ENCODE measurements at regions of chr18 and their contacts with region 1.

Region 1: GRCh38 chr18:54181856-54182602 is 42.4 kb downstream of the MBD2 start:
- DNase-seq: no peak
- H3K4me3 Mint-ChIP-seq: no peak overlapping the region
- H3K27ac Mint-ChIP-seq: no peak overlapping the region
- H3K4me1 Mint-ChIP-seq: peaks cover 3% of the 10 kb centered on the region
- H3K27me3 Mint-ChIP-seq: no peaks in the 10 kb centered on the region

Region 2: DNA sequence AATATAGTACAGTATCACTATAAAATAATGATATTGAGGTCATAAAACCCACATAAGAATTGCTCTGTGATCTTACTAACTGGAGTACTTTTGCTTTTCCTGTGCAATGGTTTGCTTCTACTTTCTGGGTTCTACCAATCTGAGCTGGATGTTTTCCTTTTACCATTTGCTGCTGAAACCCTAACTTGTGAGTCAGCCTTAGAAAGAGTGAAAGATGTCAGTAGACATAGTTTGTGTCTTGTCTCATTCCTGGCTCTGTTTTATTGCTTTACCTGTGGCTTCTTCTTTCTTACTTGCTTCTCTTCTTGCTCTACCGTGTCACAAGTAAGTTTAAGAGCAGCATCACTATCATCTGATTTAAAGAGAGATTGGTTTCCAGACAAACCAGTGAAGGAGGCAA is 18.6 kb before region 1 on chr18:
- CTCF ChIA-PET with region 1: interaction called, 3 read pairs
- POLR2A ChIA-PET with region 1: no interaction called
- intact Hi-C with region 1: loop called (anchors 1 kb)
- DNase-seq: no peak
- H3K4me3 Mint-ChIP-seq: no peak overlapping the region
- H3K27ac Mint-ChIP-seq: peak overlapping the region; percentile 85
- H3K4me1 Mint-ChIP-seq: peaks cover 22% of the 10 kb centered on the region
- H3K27me3 Mint-ChIP-seq: no peaks in the 10 kb centered on the region

Region 3: DNA sequence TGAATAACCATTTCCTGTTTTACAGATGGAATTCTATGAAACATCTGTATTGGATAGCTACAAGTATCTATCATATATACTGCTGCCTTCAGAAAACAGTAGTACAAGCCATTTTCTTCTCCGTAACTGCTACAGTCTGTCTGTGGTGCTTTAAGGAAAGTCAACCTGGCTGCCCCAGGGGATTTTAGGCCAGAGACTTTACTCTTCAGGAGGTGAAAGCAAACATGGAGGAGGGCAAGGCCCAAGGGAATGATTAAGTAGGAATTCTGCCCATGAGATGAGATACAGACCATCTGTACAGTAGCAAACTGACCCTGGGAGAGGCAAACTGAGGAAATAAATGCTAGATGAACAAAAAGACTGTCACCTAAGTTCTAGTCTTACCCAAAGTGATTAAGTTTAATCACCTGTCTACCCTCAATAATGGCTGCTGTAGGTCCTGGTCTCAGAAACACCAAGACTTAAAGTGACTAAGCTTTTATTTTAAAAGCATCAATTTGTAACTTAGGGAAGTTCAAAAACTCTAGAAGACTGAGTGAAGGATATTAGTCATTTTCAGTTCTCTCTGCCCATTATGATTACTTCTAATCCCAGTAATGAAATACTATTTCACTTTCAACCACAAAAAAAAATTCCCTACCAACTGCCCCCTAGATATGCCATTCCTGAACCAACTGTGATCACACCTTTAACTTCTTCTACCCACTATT is 27.6 kb after region 1 on chr18:
- CTCF ChIA-PET with region 1: no interaction called
- POLR2A ChIA-PET with region 1: interaction called, 3 read pairs
- intact Hi-C with region 1: loop called (anchors 1 kb)
- DNase-seq: no peak
- H3K4me3 Mint-ChIP-seq: peak overlapping the region; percentile 17
- H3K27ac Mint-ChIP-seq: peak overlapping the region; percentile 83
- H3K4me1 Mint-ChIP-seq: peaks cover 62% of the 10 kb centered on the region
- H3K27me3 Mint-ChIP-seq: no peaks in the 10 kb centered on the region

Region 4: GRCh38 chr18:54269893-54270844 is 88.1 kb after region 1 on chr18:
- CTCF ChIA-PET with region 1: interaction called, 4 read pairs
- POLR2A ChIA-PET with region 1: no interaction called
- intact Hi-C with region 1: loop called (anchors 1 kb)
- DNase-seq: peak; percentile 78
- H3K4me3 Mint-ChIP-seq: peak overlapping the region; percentile 78
- H3K27ac Mint-ChIP-seq: peak overlapping the region; percentile 94
- H3K4me1 Mint-ChIP-seq: peaks cover 29% of the 10 kb centered on the region
- H3K27me3 Mint-ChIP-seq: no peaks in the 10 kb centered on the region

Region 5: DNA sequence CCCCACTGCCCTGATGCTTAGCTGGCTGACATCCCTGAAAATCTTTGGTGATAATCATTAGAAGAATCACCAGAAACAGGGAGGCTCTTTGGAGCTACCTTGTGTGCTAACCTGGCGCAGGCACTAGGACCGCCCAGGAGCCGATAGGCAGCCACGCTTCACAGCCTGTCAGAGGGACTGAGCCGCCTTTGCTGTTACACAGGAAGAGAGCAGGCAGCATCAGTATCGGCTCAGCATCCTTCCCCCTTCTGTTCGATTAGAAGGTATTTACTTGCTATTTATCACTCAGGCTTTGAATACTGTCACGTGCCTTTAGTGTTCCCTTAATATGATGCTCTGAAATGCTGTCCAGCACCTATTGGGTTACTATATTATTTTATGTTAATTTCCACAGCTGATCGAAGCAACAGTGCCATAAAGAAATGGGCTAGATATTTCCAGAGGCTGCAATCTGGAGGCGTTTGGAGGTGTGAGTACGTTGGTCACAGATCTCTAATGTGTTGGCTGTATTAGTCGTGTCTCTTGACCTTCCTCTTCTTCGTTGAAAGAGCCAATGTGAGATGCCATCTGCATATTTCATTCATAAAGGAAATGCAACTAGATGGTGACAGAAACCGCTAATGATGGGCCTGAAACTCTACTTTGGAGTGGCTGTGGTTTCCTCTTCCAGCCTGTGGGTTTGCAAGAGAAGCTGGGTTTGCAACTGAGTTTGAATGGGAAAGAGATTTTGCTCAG is 535.8 kb after region 1 on chr18:
- CTCF ChIA-PET with region 1: no interaction called
- POLR2A ChIA-PET with region 1: no interaction called
- intact Hi-C with region 1: loop called (anchors 10 kb)
- DNase-seq: peak; percentile 62
- H3K4me3 Mint-ChIP-seq: peak overlapping the region; percentile 61
- H3K27ac Mint-ChIP-seq: peak overlapping the region; percentile 23
- H3K4me1 Mint-ChIP-seq: peaks cover 32% of the 10 kb centered on the region
- H3K27me3 Mint-ChIP-seq: peaks cover 5% of the 10 kb centered on the region